Heart right ventricle (tissue), 16 donors: ENCODE measurements at regions of chr6 and their contacts with region 1.

Region 1: DNA sequence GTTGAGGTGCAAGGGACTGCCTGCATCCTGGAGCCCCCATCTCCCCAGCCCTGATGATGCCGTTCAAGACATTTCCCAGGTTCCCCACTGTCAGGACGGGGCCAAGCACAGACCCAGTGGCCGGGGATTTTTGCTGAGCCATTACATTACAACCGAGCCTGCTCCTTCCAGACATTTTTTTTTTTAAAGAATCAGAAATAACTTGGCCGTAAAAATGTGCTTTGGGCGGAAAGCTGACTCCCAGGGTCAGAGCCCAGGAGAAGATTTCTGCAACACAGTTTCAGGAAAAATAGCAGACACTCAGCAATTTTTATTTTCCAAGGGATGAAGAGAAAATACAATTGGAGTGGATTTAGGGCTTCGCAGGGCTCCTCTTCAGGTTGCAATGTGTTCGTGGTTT is 87.9 kb downstream of the LRFN2 start:
- DNase-seq: no peak
- ATAC-seq: no peak
- H3K4me3 ChIP-seq: no peak overlapping the region
- H3K27ac ChIP-seq: no peak overlapping the region
- H3K4me1 ChIP-seq: no peaks in the 10 kb centered on the region
- H3K27me3 ChIP-seq: peaks cover 0 to 58% (median 20%) of the 10 kb centered on the region in 7 donors
- CTCF ChIP-seq: no peak

Region 2: GRCh38 chr6:39599973-39600372 is 899.2 kb before region 1 on chr6:
- intact Hi-C with region 1: loop called in 1 of 10 experiments (anchors 5 kb)
- DNase-seq: no peak
- ATAC-seq: no peak
- H3K4me3 ChIP-seq: no peak overlapping the region
- H3K27ac ChIP-seq: no peak overlapping the region
- H3K4me1 ChIP-seq: no peaks in the 10 kb centered on the region
- H3K27me3 ChIP-seq: peaks cover 0 to 6% (median 0%) of the 10 kb centered on the region in 7 donors
- CTCF ChIP-seq: no peak

Region 3: GRCh38 chr6:40460380-40460779 is 38.8 kb before region 1 on chr6:
- intact Hi-C with region 1: no loop called
- DNase-seq: no peak
- ATAC-seq: no peak
- H3K4me3 ChIP-seq: no peak overlapping the region
- H3K27ac ChIP-seq: no peak overlapping the region
- H3K4me1 ChIP-seq: no peaks in the 10 kb centered on the region
- H3K27me3 ChIP-seq: peaks cover 0 to 36% (median 12%) of the 10 kb centered on the region in 7 donors
- CTCF ChIP-seq: no peak